H1 (cell line): ENCODE measurements at regions of chr9 and their contacts with region 1.

Region 1: DNA sequence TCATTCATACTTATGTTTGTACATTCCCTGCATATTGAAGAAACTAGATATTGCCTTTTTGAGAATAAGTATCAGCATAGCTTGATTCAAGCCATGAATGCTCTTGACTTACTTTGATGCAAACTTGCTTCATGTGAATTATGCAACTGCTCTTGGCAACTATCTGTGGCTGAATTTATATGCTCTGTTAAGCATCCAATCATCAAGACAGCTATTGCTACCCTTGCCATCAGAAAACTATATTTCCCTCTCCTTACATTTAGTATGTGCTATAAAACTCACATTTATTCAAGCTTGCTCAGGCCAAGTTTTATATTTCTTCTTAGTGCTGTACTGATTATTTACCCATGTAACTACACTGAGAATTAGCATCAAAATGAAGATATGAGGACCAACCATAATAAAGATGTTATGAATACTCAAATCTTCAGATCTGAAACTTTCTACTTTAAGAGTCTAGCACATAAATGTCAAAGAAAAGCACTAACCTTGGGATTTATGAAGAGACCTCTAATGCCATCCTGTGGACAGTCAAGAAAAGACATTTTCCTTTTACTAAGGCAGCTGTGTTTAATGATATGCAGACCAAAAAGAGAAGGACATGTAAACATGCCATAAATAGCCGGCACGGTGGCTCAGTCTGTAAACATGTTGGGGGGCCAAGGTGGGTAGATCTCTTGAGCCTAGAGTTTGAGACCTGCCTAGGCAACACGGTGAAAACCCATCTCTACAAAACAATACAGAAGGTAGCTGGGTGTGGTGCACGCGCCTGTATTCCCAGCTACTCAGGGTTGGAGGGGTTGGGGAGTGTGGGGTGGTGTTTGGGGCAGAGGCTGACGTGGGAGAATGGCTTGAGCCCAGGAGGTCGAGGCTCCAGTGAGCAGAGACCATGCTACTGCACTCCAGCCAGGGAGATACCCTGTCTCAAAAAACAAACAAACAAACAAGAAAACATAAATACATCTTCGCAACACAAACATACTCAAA is 267.0 kb upstream of the TYRP1 start:
- DNase-seq: peak in 1 of 2 experiments; percentile 49
- H3K4me3 ChIP-seq: no peak overlapping the region
- H3K27ac ChIP-seq: no peak overlapping the region
- H3K4me1 ChIP-seq: peaks cover 0 to 3% (median 0%) of the 10 kb centered on the region in 4 experiments; a peak in 1 of 7 replicates
- H3K27me3 ChIP-seq: no peaks in the 10 kb centered on the region
- CTCF ChIP-seq: peak in 1 of 3 experiments; percentile 46; a peak in 2 of 4 replicates
- EP300 ChIP-seq: no peak
- POLR2A ChIP-seq: no peak
- RAD21 ChIP-seq: peak; percentile 61 to 67

Region 2: DNA sequence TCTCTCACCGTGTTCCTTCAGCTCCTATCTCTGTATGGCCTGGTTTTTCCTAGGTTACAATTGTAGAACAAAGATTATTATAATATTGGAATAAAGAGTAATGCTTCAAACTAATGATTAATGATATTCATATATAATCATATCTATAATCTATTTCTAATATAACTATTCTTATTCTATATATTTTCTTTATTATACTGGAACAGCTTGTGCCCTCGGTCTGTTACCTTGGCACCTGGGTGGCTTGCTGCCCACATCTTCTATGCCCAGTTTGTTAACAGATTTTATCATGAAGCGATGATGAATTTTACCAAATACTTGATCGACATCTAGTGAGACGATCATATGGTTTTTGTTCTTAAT is 96.6 kb before region 1 on chr9:
- CTCF ChIA-PET with region 1: interaction called, 16 read pairs
- POLR2A ChIA-PET with region 1: no interaction called
- DNase-seq: no peak
- H3K4me3 ChIP-seq: no peak overlapping the region
- H3K27ac ChIP-seq: no peak overlapping the region
- H3K4me1 ChIP-seq: peaks cover 0 to 3% (median 0%) of the 10 kb centered on the region in 4 experiments; a peak in 1 of 7 replicates
- H3K27me3 ChIP-seq: no peaks in the 10 kb centered on the region
- CTCF ChIP-seq: no peak
- EP300 ChIP-seq: no peak
- POLR2A ChIP-seq: no peak
- RAD21 ChIP-seq: no peak

Region 3: GRCh38 chr9:12414514-12414913 is 11.7 kb before region 1 on chr9:
- CTCF ChIA-PET with region 1: interaction called, 16 read pairs
- POLR2A ChIA-PET with region 1: no interaction called
- DNase-seq: no peak
- H3K4me3 ChIP-seq: no peak overlapping the region
- H3K27ac ChIP-seq: no peak overlapping the region
- H3K4me1 ChIP-seq: no peaks in the 10 kb centered on the region
- H3K27me3 ChIP-seq: no peaks in the 10 kb centered on the region
- CTCF ChIP-seq: no peak
- EP300 ChIP-seq: no peak
- POLR2A ChIP-seq: no peak
- RAD21 ChIP-seq: no peak

Region 4: DNA sequence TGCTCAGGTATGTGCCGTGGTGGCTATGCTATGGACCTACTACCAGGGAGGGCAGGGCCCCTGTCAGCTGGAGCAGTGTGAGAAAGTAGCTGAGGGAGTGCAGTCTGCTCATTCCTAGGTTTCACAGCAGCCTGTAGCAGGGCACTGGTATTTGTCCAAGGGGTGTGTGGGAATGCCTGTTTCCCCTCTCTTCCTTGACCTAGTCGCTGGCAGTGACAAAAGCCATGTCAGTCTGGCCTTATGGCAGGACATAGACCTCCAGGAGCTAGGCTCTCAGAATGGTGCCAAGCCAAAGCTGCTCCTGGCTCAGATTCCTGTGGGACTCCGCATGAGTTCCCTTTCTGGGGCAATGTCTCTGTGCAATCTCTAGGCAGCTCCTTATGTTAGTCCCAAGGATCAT is 13.1 kb after region 1 on chr9:
- CTCF ChIA-PET with region 1: interaction called, 10 read pairs
- POLR2A ChIA-PET with region 1: no interaction called
- DNase-seq: no peak
- H3K4me3 ChIP-seq: no peak overlapping the region
- H3K27ac ChIP-seq: no peak overlapping the region
- H3K4me1 ChIP-seq: peaks cover 0 to 3% (median 0%) of the 10 kb centered on the region in 4 experiments; a peak in 1 of 7 replicates
- H3K27me3 ChIP-seq: no peaks in the 10 kb centered on the region
- CTCF ChIP-seq: no peak
- EP300 ChIP-seq: no peak
- POLR2A ChIP-seq: no peak
- RAD21 ChIP-seq: no peak

Region 5: DNA sequence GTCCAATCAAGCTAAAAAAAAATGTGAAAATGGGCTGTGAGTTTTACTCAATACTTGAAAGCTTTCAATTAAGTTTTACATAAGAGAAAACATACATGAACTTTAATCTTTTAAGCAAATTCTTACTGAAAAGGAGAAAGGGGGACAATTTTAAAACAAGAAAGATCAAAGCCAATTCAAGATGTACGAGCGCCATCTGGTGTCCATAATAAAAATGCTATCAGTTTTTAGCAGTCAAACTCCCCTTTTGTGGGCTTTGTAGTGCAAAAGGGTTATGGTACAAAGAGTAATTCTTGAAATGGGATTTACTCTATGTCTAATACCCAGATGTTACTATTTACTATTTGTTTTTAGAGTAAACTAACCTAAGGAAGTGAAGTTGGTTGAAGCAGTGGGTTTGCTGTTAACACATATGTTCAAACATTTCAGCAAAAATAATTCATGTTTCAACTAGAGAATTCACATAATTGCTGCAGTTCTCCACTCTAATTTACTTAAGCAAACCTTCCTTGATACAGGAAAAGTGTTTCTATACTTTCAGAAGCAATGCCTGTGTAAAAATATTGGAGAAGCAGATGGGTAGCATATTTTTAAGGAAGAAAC is 38.8 kb after region 1 on chr9:
- CTCF ChIA-PET with region 1: interaction called, 19 read pairs
- POLR2A ChIA-PET with region 1: no interaction called
- DNase-seq: no peak
- H3K4me3 ChIP-seq: no peak overlapping the region
- H3K27ac ChIP-seq: no peak overlapping the region
- H3K4me1 ChIP-seq: peaks cover 0 to 8% (median 1%) of the 10 kb centered on the region in 4 experiments; a peak in 2 of 7 replicates
- H3K27me3 ChIP-seq: no peaks in the 10 kb centered on the region
- CTCF ChIP-seq: peak in 2 of 3 experiments; percentile 37 to 43; a peak in 2 of 4 replicates
- EP300 ChIP-seq: no peak
- POLR2A ChIP-seq: no peak
- RAD21 ChIP-seq: peak; percentile 72 to 85